Heart right ventricle (tissue), 16 donors: ENCODE measurements at regions of chr11 and their contacts with region 1.

Region 1: GRCh38 chr11:36469881-36470802 is 39.9 kb downstream of the TRAF6 start:
- DNase-seq: no peak
- ATAC-seq: peak in 5 of 8 donors; percentile 55 to 65 (median 56)
- H3K4me3 ChIP-seq: no peak overlapping the region
- H3K27ac ChIP-seq: peak overlapping the region in 2 of 10 donors; percentile 32 to 40
- H3K4me1 ChIP-seq: peaks cover 4 to 22% (median 18%) of the 10 kb centered on the region in 9 donors
- H3K27me3 ChIP-seq: no peaks in the 10 kb centered on the region
- CTCF ChIP-seq: no peak

Region 2: GRCh38 chr11:36300651-36301050 is 169.5 kb before region 1 on chr11:
- intact Hi-C with region 1: loop called in 5 of 10 experiments (anchors 5 to 10 kb)
- DNase-seq: peak; percentile 48 to 69
- ATAC-seq: peak; percentile 73 to 97 (median 92)
- H3K4me3 ChIP-seq: no peak overlapping the region
- H3K27ac ChIP-seq: no peak overlapping the region
- H3K4me1 ChIP-seq: peaks cover 0 to 17% (median 3%) of the 10 kb centered on the region in 9 donors
- H3K27me3 ChIP-seq: no peaks in the 10 kb centered on the region
- CTCF ChIP-seq: no peak

Region 3: GRCh38 chr11:36306888-36307287 is 163.3 kb before region 1 on chr11:
- intact Hi-C with region 1: loop called in 3 of 10 experiments (anchors 5 kb)
- DNase-seq: no peak
- ATAC-seq: no peak
- H3K4me3 ChIP-seq: no peak overlapping the region
- H3K27ac ChIP-seq: no peak overlapping the region
- H3K4me1 ChIP-seq: peaks cover 0 to 12% (median 0%) of the 10 kb centered on the region in 9 donors
- H3K27me3 ChIP-seq: peaks cover 0 to 2% (median 0%) of the 10 kb centered on the region in 7 donors
- CTCF ChIP-seq: peak in 7 of 9 donors; percentile 23 to 54 (median 39)

Region 4: DNA sequence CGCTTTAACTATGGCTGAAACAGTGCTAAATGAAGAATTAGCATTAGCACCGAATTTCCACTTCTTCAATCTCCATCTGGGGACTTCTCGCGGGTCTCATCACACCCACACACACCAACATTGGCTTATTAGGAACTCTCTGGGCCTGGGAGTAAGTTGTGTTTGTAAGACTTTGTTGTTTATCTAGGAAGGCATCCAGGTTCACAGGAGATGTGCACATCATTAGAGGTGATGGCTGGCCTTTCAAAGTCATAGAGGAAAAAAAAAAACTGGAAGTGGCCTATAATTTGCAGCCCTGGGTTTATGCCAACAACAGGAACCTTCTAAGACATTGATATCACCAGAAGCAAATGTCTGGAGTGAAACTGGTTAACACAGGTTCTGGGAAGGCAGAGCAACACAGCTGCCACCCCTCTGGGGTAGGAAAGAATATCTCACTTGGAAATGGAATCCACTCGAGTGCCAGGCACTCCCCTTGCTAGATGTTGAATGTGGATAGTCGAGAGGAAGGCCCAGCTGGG is 44.5 kb before region 1 on chr11:
- intact Hi-C with region 1: no loop called
- DNase-seq: no peak
- ATAC-seq: peak in 2 of 8 donors; percentile 21 to 30
- H3K4me3 ChIP-seq: no peak overlapping the region
- H3K27ac ChIP-seq: peak overlapping the region in 3 of 10 donors; percentile 26 to 58 (median 28)
- H3K4me1 ChIP-seq: peaks cover 0 to 54% (median 12%) of the 10 kb centered on the region in 9 donors
- H3K27me3 ChIP-seq: no peaks in the 10 kb centered on the region
- CTCF ChIP-seq: no peak

Region 5: GRCh38 chr11:36550385-36551115 is 80.4 kb after region 1 on chr11:
- intact Hi-C with region 1: no loop called
- DNase-seq: no peak
- ATAC-seq: no peak
- H3K4me3 ChIP-seq: no peak overlapping the region
- H3K27ac ChIP-seq: no peak overlapping the region
- H3K4me1 ChIP-seq: peaks cover 0 to 3% (median 0%) of the 10 kb centered on the region in 9 donors
- H3K27me3 ChIP-seq: no peaks in the 10 kb centered on the region
- CTCF ChIP-seq: no peak